ENCODE measurements at regions of chr1 and their contacts with region 1.

Region 1: DNA sequence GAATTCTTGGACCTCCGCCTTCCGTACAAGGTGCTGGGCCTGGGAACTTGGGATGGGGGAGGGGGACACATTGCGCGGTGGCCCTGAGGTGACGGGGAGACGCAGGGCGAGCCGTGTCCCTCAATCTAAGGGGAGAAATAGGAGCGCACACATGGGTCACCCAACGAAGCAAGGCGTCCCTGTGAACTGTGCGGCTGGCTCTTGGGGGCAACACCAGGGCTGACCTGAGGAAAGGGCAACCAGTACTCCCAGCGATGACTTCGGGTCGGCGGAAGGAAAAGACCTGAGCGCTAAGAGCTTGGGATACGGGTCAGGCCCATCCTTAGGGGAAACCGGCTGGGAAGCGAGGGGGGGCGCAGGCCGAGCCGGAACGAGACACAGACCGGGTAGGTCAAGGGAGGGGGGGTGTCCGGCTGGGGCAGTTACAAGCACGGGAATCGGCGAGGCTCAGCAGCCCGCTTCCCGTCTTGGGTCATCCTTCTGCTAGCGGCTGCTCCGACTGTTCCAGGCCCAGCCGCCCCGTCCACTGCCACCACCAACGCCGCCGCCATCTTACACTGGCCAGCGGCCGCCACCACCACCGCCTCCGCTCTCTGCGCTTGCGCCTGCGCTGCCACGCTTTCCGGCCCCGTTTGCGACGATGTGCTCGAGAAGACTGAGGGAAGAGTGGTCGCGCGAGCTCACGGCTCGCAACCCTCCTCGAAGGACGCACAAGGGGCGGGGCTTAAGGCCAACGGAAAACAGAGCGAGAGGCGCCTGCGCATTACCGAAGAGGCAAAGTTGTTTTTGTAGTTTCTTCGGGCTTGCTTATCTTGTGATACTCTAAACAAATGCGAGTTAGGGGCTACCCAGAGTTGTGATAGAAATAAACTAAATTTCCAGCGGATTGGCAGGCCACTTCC is at the start of gene DCAF8:
- DNase-seq: peak; percentile 99
- ATAC-seq: peak; percentile 92
- H3K4me3 Mint-ChIP-seq: peak within 1 kb of the TSS; percentile 83
- H3K27ac Mint-ChIP-seq: peak within 1 kb of the TSS; percentile 97
- H3K4me1 Mint-ChIP-seq: peaks cover 41% of the 10 kb centered on the region
- H3K27me3 Mint-ChIP-seq: no peaks in the 10 kb centered on the region
- CTCF ChIP-seq: no peak
- total RNA-seq, gene DCAF8: 116 TPM

Region 2: GRCh38 chr1:160277330-160277729 is 15.2 kb after region 1 on chr1:
- CTCF ChIA-PET with region 1: no interaction called
- POLR2A ChIA-PET with region 1: interaction called, 13 read pairs
- intact Hi-C with region 1: no loop called
- DNase-seq: no peak
- ATAC-seq: no peak
- H3K4me3 Mint-ChIP-seq: no peak overlapping the region
- H3K27ac Mint-ChIP-seq: peak overlapping the region; percentile 52
- H3K4me1 Mint-ChIP-seq: no peaks in the 10 kb centered on the region
- H3K27me3 Mint-ChIP-seq: no peaks in the 10 kb centered on the region
- CTCF ChIP-seq: no peak

Region 3: DNA sequence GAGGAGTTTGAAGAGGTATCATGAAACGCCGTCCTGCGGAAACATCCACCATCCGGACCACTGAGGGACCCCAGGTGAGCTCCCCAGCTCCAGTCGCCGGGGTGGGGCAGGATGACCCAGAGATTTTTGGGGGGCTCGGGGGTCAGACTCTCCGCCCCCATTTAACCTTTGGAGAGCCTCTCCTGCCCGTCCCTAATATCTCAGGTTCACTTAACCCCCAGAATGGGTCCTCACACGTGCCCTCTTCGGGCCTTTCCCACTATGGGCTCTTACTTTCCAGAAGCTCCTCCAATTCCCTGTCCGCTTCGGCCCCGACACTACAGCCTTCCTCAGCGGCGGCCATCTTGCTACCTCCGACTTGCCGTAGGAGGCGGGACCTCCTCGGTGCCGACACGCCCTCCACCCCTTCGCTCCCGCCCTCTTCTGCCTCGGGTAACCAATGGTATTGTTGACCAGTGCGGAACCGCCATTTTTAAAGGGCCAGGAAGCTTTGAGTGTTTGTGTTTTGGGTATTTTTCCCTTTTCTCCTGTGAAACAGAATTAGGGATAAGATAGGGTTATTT is 22.7 kb after region 1 on chr1 and contains the start of gene PEX19:
- CTCF ChIA-PET with region 1: interaction called, 5 read pairs
- POLR2A ChIA-PET with region 1: interaction called, 41 read pairs
- intact Hi-C with region 1: no loop called
- DNase-seq: peak; percentile 97
- ATAC-seq: peak; percentile 100
- H3K4me3 Mint-ChIP-seq: peak within 1 kb of the TSS; percentile 94
- H3K27ac Mint-ChIP-seq: peak within 1 kb of the TSS; percentile 94
- H3K4me1 Mint-ChIP-seq: peaks cover 20% of the 10 kb centered on the region
- H3K27me3 Mint-ChIP-seq: no peaks in the 10 kb centered on the region
- CTCF ChIP-seq: no peak
- total RNA-seq, gene PEX19: 52.9 to 56.9 TPM

Region 4: GRCh38 chr1:160362168-160362957 is 100.2 kb after region 1 on chr1:
- CTCF ChIA-PET with region 1: no interaction called
- POLR2A ChIA-PET with region 1: no interaction called
- intact Hi-C with region 1: no loop called
- DNase-seq: no peak
- ATAC-seq: no peak
- H3K4me3 Mint-ChIP-seq: no peak overlapping the region
- H3K27ac Mint-ChIP-seq: peak overlapping the region; percentile 59
- H3K4me1 Mint-ChIP-seq: no peaks in the 10 kb centered on the region
- H3K27me3 Mint-ChIP-seq: no peaks in the 10 kb centered on the region
- CTCF ChIP-seq: no peak